Naive thymus-derived CD4-positive, alpha-beta T cell (primary cell): ENCODE measurements at regions of chr4 and their contacts with region 1.

Region 1: GRCh38 chr4:140359562-140360427 is 13.7 kb upstream of the SCOC start:
- DNase-seq: peak; percentile 42 to 80 (median 71)
- ATAC-seq: peak; percentile 95
- H3K4me3 ChIP-seq: no peak overlapping the region
- H3K4me3 Mint-ChIP-seq: peak overlapping the region in 2 of 10 donors; percentile 20 to 43
- H3K27ac ChIP-seq: no peak overlapping the region
- H3K27ac Mint-ChIP-seq: peak overlapping the region in 1 of 9 donors; percentile 42
- H3K4me1 ChIP-seq: no peaks in the 10 kb centered on the region
- H3K4me1 Mint-ChIP-seq: peaks cover 0 to 5% (median 3%) of the 10 kb centered on the region in 7 donors
- H3K27me3 ChIP-seq: no peaks in the 10 kb centered on the region
- H3K27me3 Mint-ChIP-seq: peaks cover 0 to 18% (median 0%) of the 10 kb centered on the region in 5 donors

Region 2: GRCh38 chr4:139734875-139735380 is 624.9 kb before region 1 on chr4:
- CTCF ChIA-PET with region 1: interaction called, 6 read pairs
- POLR2A ChIA-PET with region 1: no interaction called
- intact Hi-C with region 1: loop called in 1 of 2 experiments (anchors 1 kb)
- DNase-seq: peak; percentile 12 to 67 (median 45)
- ATAC-seq: peak; percentile 87
- H3K4me3 ChIP-seq: peak overlapping the region; percentile 44
- H3K4me3 Mint-ChIP-seq: peak overlapping the region; percentile 70 to 89 (median 78)
- H3K27ac ChIP-seq: no peak overlapping the region
- H3K27ac Mint-ChIP-seq: peak overlapping the region in 1 of 9 donors; percentile 29
- H3K4me1 ChIP-seq: peaks cover 0 to 5% of the 10 kb centered on the region in 2 donors
- H3K4me1 Mint-ChIP-seq: peaks cover 6 to 17% (median 13%) of the 10 kb centered on the region in 7 donors
- H3K27me3 ChIP-seq: no peaks in the 10 kb centered on the region
- H3K27me3 Mint-ChIP-seq: peaks cover 30 to 58% (median 39%) of the 10 kb centered on the region in 5 donors

Region 3: DNA sequence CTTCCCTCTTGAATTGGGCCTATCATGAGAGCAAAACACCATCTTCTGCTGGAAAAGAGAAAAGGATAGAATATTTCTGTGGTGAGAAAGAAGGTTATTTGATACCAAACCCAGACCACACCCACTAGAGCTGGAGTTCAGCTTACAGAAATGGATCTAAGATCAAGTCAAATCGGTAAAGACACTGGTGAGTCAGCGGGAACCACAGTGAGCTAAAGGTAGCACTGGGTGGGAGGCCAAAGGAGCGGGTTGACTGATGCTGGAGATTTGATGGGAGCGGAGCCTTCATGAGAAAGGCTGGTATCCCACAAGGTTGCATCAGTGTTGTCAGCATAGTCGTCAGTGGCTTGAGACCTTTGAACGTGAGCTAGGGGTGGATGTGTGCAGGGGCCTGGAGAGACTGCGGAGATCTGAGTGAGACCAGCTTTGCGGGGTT is 92.8 kb before region 1 on chr4:
- CTCF ChIA-PET with region 1: no interaction called
- POLR2A ChIA-PET with region 1: no interaction called
- intact Hi-C with region 1: no loop called
- DNase-seq: no peak
- ATAC-seq: no peak
- H3K4me3 ChIP-seq: no peak overlapping the region
- H3K4me3 Mint-ChIP-seq: no peak overlapping the region
- H3K27ac ChIP-seq: no peak overlapping the region
- H3K27ac Mint-ChIP-seq: no peak overlapping the region
- H3K4me1 ChIP-seq: no peaks in the 10 kb centered on the region
- H3K4me1 Mint-ChIP-seq: no peaks in the 10 kb centered on the region
- H3K27me3 ChIP-seq: no peaks in the 10 kb centered on the region
- H3K27me3 Mint-ChIP-seq: peaks cover 0 to 13% (median 0%) of the 10 kb centered on the region in 5 donors

Region 4: DNA sequence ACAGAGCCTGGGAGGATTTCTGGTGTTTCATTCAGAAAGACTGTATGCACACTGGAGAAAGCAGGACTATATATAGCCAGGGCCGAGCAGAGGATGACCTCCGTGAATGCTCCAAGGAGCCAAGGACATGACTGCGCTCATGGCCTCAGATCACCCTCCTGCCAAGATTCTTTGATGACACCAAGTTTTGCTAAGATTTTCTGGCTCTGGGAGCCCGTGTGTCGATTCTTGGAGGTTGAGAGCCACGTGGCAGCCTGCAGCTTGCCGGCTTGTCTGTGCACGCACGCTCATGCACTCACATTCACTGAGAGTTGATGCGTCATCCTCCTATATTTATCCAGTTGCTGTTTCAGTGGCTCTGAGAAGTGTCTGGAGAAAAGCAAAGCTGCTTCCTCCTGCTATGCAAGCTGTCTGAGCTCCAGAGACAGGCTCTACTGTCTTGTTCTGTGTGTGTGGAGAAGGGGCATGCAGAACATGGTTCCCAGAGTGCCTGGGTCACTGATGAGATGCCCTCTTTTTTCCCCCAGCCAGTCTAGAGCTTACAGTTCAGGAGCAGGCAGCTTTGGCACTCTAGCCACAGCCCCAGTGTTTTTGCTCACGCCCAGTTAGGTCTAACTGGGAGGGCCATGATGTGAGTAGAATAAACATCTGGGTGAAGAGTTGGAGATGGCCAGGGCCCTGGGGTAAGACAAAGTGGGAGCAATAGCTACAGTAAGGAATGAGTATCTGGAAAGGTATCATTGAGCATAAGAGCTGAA is 51.2 kb before region 1 on chr4:
- CTCF ChIA-PET with region 1: interaction called, 5 read pairs
- POLR2A ChIA-PET with region 1: no interaction called
- intact Hi-C with region 1: loop called in 1 of 2 experiments (anchors 1 kb)
- DNase-seq: no peak
- ATAC-seq: no peak
- H3K4me3 ChIP-seq: no peak overlapping the region
- H3K4me3 Mint-ChIP-seq: no peak overlapping the region
- H3K27ac ChIP-seq: no peak overlapping the region
- H3K27ac Mint-ChIP-seq: no peak overlapping the region
- H3K4me1 ChIP-seq: no peaks in the 10 kb centered on the region
- H3K4me1 Mint-ChIP-seq: peaks cover 0 to 5% (median 0%) of the 10 kb centered on the region in 7 donors
- H3K27me3 ChIP-seq: no peaks in the 10 kb centered on the region
- H3K27me3 Mint-ChIP-seq: peaks cover 0 to 33% (median 4%) of the 10 kb centered on the region in 5 donors

Region 5: DNA sequence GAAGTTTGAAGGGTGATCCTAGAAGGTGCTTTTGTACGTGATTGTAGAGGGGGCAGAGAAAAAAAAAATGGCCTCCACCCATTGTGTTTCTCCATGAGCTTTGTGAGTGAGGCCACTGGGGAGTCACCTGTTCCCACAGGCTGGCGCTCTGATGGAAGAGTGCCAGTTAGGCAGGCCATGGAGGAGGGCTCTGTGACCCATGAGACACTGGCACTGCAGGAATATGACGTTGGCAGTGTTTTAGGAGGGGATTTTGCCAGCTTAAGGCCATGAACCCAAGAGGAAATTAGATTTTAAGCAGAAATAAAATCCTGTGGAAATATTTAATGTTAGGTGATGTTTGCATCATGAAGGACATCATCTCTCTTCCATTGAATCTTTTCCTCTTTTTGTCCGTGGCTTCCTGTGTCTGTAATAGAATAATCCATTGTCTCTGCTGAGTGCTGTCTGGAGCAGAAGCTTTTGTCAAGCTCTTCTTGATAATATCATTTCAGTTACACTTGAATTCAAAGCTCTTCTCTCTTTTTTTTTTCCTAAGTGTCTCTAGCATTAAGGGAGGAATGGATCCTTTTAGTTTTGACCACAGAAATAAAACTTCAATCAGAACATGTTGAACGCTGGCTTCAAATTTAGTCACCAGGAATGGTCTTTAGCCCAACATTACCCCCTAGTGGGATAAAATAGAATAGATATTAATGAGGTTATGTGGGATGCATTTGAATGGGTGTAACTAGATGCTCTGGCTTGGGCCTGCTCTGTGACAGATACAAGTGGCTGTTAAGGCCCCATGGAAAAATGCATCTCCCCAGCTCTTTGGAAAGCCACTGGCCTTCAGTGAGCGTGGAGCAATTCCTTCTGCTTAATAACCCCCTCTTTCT is 250.0 kb after region 1 on chr4:
- CTCF ChIA-PET with region 1: interaction called, 22 read pairs
- POLR2A ChIA-PET with region 1: no interaction called
- intact Hi-C with region 1: loop called (anchors 1 kb)
- DNase-seq: peak in 5 of 9 donors; percentile 21 to 49 (median 25)
- ATAC-seq: peak; percentile 73
- H3K4me3 ChIP-seq: no peak overlapping the region
- H3K4me3 Mint-ChIP-seq: no peak overlapping the region
- H3K27ac ChIP-seq: no peak overlapping the region
- H3K27ac Mint-ChIP-seq: no peak overlapping the region
- H3K4me1 ChIP-seq: no peaks in the 10 kb centered on the region
- H3K4me1 Mint-ChIP-seq: peaks cover 0 to 2% (median 0%) of the 10 kb centered on the region in 7 donors
- H3K27me3 ChIP-seq: no peaks in the 10 kb centered on the region
- H3K27me3 Mint-ChIP-seq: peaks cover 0 to 7% (median 0%) of the 10 kb centered on the region in 5 donors

Region 6: DNA sequence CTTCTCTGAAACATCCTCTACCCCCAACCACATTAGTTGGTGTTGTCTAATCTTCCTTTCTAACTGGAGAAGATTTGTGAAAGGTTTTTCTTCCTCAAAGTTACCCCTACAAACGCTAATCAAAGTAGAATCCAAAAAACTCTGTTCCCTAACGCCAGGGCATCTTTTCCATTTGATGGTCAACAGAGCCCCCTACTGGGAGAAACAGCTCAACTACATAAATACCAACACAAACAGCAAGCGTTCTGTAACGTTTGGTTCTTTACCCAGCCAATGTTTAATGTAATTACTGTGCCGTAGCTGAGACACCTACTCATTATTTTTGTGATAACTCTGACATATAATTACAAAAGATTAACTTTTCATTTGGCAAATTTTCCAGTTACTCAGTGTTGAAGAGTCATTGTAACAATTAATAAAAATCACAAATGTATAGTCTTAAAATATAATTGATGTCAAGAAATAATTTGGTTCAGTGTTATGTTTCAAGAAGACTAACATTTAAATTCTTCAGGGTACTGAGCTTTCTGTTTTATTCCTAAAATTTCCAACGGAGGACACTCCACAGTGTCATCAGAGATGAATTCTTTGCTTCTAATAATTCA is 491.3 kb after region 1 on chr4:
- CTCF ChIA-PET with region 1: no interaction called
- POLR2A ChIA-PET with region 1: no interaction called
- intact Hi-C with region 1: loop called (anchors 1 to 5 kb)
- DNase-seq: peak in 1 of 9 donors; percentile 5
- ATAC-seq: peak; percentile 54
- H3K4me3 ChIP-seq: no peak overlapping the region
- H3K4me3 Mint-ChIP-seq: no peak overlapping the region
- H3K27ac ChIP-seq: no peak overlapping the region
- H3K27ac Mint-ChIP-seq: no peak overlapping the region
- H3K4me1 ChIP-seq: no peaks in the 10 kb centered on the region
- H3K4me1 Mint-ChIP-seq: peaks cover 0 to 2% (median 0%) of the 10 kb centered on the region in 7 donors
- H3K27me3 ChIP-seq: no peaks in the 10 kb centered on the region
- H3K27me3 Mint-ChIP-seq: peaks cover 20 to 56% (median 42%) of the 10 kb centered on the region in 5 donors